GM13976 (cell line): ENCODE measurements at regions of chr13 and their contacts with region 1.

Region 1: GRCh38 chr13:110233181-110233950 is 73.6 kb downstream of the COL4A1 start:
- DNase-seq: no peak
- CTCF ChIP-seq: no peak

Region 2: DNA sequence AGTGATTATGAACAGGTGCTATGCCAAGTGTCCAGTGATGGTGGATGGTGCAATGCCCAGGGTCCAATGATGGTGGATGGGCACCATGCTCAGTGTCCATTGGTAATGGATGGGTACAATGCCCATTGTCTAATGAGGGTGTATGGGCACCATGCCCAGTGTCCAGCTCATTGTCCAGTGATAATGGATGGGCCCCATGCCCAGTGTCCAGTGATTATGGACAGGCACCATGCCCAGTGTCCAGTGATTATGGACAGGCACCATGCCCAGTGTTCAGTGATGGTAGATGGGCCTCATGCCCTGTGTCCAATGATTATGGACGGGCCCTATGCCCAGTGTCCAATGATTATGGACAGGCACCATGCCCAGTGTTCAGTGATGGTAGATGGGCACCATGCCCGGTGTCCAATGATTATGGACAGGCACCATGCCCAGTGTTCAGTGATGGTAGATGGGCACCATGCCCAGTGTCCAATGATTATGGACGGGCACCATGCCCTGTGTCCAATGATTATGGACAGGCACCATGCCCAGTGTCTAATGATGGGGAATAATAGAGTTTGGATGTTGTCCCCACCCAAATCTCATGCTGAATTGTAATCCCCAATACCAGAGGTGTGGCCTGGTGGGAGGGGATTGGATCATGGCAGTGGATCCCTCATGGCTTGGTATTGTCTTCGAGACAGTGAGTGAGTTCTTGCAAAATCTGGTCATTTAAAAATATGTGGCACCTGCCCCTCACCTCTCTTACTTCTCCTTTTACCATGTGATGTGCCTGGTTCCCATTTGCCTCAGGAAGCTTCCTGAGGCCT is 593.7 kb after region 1 on chr13:
- in situ Hi-C with region 1: loop called (anchors 25 kb)
- DNase-seq: no peak
- CTCF ChIP-seq: no peak